T-cell (primary cell): ENCODE measurements at regions of chr12 and their contacts with region 1.

Region 1: GRCh38 chr12:65878544-65878943 is 54.3 kb downstream of the HMGA2 start:
- DNase-seq: no peak
- ATAC-seq: no peak
- H3K4me3 ChIP-seq: no peak overlapping the region
- H3K4me3 Mint-ChIP-seq: no peak overlapping the region
- H3K27ac ChIP-seq: no peak overlapping the region
- H3K27ac Mint-ChIP-seq: no peak overlapping the region
- H3K4me1 ChIP-seq: no peaks in the 10 kb centered on the region
- H3K4me1 Mint-ChIP-seq: peaks cover 0 to 3% (median 0%) of the 10 kb centered on the region in 3 donors
- H3K27me3 ChIP-seq: peaks cover 0 to 10% of the 10 kb centered on the region in 2 experiments
- H3K27me3 Mint-ChIP-seq: peaks cover 33 to 36% of the 10 kb centered on the region in 2 donors

Region 2: DNA sequence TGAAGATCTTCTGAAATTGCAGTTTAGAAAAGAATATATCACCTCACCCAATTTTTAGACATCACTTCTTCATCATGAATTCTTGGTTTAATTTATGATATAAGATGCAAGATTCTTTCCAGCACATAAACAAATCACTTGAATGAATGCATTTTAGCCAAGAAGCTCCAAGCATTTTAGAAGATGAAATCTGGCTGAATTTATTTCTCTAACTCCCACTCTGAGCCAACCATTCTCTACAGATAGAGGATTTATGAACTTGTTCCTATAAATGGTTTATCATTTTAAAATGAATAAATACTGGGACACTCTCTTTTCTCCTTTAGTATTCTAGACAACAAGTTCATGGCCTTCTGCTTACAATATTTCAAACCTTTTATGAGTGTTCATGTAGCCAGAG is 728.6 kb after region 1 on chr12:
- CTCF ChIA-PET with region 1: no interaction called
- POLR2A ChIA-PET with region 1: interaction called in 1 of 2 experiments, 12 read pairs
- DNase-seq: no peak
- ATAC-seq: no peak
- H3K4me3 ChIP-seq: no peak overlapping the region
- H3K4me3 Mint-ChIP-seq: no peak overlapping the region
- H3K27ac ChIP-seq: no peak overlapping the region
- H3K27ac Mint-ChIP-seq: no peak overlapping the region
- H3K4me1 ChIP-seq: no peaks in the 10 kb centered on the region
- H3K4me1 Mint-ChIP-seq: no peaks in the 10 kb centered on the region
- H3K27me3 ChIP-seq: peaks cover 0 to 2% of the 10 kb centered on the region in 2 experiments
- H3K27me3 Mint-ChIP-seq: peaks cover 2 to 4% of the 10 kb centered on the region in 2 donors

Region 3: GRCh38 chr12:66739933-66740648 is 861.5 kb after region 1 on chr12:
- CTCF ChIA-PET with region 1: no interaction called
- POLR2A ChIA-PET with region 1: no interaction called
- DNase-seq: no peak
- ATAC-seq: no peak
- H3K4me3 ChIP-seq: no peak overlapping the region
- H3K4me3 Mint-ChIP-seq: no peak overlapping the region
- H3K27ac ChIP-seq: no peak overlapping the region
- H3K27ac Mint-ChIP-seq: no peak overlapping the region
- H3K4me1 ChIP-seq: peaks cover 2 to 16% of the 10 kb centered on the region in 2 experiments
- H3K4me1 Mint-ChIP-seq: peaks cover 16 to 32% (median 30%) of the 10 kb centered on the region in 3 donors
- H3K27me3 ChIP-seq: peaks cover 0 to 3% of the 10 kb centered on the region in 2 experiments
- H3K27me3 Mint-ChIP-seq: peaks cover 0 to 4% of the 10 kb centered on the region in 2 donors